ENCODE measurements at regions of chr2 and their contacts with region 1.

Region 1: DNA sequence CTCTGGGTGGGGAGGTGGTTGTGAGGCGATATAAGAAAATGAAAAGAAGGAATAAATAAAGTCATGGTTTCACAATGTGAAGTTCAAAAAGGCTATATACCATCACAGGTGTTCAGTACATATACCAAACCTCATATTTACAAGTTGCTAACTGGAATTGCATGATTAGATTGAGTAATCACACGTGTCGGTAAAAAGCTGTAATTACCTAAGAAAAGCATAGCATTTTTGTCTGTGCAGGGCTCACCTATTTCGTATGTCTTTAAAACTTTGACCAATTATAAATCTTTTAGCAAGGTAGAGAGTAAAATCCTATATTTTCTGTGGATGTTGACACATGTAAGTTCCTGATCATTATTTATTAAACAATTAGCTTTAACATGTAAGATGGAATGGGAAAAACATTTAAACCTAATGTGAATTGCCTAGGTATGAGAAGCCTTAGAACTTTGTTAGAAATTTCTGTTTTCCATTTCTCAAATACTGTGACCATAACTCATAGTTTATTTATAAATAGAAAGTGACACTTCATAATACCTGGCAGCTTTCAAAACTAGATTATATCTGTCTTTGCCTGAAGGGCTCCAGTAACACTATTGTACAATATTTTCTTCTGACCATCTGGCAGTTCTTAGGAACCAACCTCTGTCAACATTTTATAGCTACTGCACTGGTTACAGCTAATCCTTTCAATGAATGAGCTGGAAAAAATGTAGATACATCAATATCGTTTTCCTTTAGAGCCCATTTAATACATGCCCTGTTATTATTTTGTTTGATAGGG is 237.2 kb downstream of the CAMKMT start:
- DNase-seq: no peak
- H3K4me3 ChIP-seq: no peak overlapping the region
- H3K27ac ChIP-seq: no peak overlapping the region
- H3K4me1 ChIP-seq: no peaks in the 10 kb centered on the region
- H3K27me3 ChIP-seq: no peaks in the 10 kb centered on the region
- CTCF ChIP-seq: no peak

Region 2: DNA sequence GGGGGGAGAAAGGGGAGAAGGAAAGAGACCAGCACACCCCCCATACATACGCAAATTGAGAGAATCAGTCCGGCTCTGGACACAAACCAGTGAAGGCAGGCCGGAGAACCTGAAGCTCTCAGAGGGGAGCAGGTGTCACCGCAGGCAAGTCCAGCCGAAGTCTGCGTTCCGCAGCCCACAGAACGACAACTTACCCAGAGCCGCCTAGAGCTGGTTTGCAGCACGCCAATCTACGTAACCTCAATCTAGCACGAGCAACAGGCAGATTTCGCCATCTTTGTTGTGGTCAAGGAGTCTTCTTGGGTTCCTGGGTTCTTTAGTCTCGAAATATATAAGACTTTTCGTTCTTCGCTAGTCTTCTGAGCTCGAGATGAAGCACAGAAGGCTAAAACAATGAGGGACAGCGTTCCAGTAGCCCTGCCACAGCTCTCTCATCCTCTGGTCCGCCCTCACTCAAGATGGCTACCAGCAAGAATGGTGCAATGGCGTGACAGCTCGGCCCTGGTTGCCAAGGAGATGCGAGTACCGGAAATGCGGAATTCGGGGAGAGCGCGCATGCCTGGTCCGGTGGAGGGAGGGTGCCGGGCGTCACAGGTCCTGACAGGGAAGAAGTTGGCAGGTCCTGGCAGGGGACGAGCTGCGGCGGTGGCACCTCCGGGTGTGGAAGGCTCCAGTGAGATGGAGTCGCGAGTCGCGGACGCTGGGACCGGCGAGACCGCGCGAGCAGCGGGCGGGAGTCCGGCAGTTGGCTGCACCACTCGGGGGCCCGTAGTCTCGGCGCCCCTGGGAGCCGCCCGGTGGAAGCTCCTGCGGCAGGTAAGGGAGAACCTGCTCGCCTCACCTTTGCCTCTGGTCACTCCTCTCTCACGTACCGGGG is 237.4 kb before region 1 on chr2 and contains the starts of genes CAMKMT and PREPL:
- intact Hi-C with region 1: no loop called
- DNase-seq: peak; percentile 98 to 99
- H3K4me3 ChIP-seq: peak within 1 kb of the TSS; percentile 85 to 91
- H3K27ac ChIP-seq: peak within 1 kb of the TSS; percentile 95 to 97
- H3K4me1 ChIP-seq: peaks cover 0 to 46% (median 22%) of the 10 kb centered on the region in 4 donors
- H3K27me3 ChIP-seq: no peaks in the 10 kb centered on the region
- CTCF ChIP-seq: peak in 1 of 2 experiments; percentile 6

Region 3: GRCh38 chr2:44582363-44583008 is 16.5 kb before region 1 on chr2:
- intact Hi-C with region 1: loop called (anchors 2 kb)
- DNase-seq: no peak
- H3K4me3 ChIP-seq: no peak overlapping the region
- H3K27ac ChIP-seq: no peak overlapping the region
- H3K4me1 ChIP-seq: peaks cover 0 to 6% (median 0%) of the 10 kb centered on the region in 4 donors
- H3K27me3 ChIP-seq: no peaks in the 10 kb centered on the region
- CTCF ChIP-seq: no peak

Measured in tibial artery (tissue), 4 donors.